ENCODE measurements at regions of chr2 and their contacts with region 1.

Region 1: GRCh38 chr2:3207091-3207491 is 170.5 kb downstream of the EIPR1 start:
- DNase-seq: no peak

Region 2: DNA sequence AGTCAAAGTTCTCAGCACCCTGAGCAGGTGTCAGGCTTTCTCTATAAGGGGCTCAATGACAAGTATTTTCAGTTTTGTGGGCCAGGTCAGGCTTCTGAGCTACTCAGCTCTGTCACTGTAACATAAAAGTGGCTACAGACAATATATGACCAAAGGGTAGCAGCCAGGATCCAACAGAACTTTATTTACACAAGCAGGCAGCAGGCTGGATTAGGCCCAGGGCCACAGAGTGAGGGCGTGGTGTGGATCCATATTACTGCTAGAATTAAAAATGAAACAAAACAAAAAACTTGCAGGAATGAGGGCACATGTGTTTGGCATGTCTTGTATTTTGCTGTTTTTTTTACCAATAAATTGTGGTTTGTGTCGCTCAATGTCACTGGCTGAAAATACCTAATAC is 26.8 kb after region 1 on chr2:
- intact Hi-C with region 1: loop called in 1 of 2 experiments (anchors 1 kb)
- DNase-seq: no peak

Region 3: DNA sequence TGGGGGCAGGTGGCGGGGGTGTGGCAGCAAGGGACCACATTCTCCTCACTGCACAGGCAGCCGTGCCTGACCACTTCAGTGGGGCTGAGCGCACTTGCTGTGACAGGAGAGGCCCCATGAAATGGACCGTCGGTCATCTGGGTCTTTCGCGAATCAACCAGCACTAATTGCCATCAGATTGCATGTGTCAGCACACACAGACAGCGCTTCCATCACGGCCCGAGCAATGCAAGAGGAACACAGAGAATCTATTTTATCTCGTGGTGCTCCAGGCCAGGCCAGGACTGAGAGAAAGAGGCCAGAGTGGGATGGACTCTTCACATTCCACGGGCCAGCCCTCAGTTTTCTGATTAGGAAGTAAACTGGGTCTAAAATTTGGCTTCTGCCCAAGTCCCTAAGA is 83.6 kb after region 1 on chr2:
- intact Hi-C with region 1: no loop called
- DNase-seq: peak; percentile 30